Ascending aorta (tissue), 2 donors: ENCODE measurements at regions of chr4 and their contacts with region 1.

Region 1: GRCh38 chr4:155353923-155354540 is 22.7 kb downstream of the MAP9 start:
- DNase-seq: peak in 1 of 2 donors; percentile 79
- H3K4me3 ChIP-seq: no peak overlapping the region
- H3K27ac ChIP-seq: no peak overlapping the region
- H3K4me1 ChIP-seq: no peaks in the 10 kb centered on the region
- H3K27me3 ChIP-seq: no peaks in the 10 kb centered on the region
- CTCF ChIP-seq: peak; percentile 15 to 70 (median 62)

Region 2: DNA sequence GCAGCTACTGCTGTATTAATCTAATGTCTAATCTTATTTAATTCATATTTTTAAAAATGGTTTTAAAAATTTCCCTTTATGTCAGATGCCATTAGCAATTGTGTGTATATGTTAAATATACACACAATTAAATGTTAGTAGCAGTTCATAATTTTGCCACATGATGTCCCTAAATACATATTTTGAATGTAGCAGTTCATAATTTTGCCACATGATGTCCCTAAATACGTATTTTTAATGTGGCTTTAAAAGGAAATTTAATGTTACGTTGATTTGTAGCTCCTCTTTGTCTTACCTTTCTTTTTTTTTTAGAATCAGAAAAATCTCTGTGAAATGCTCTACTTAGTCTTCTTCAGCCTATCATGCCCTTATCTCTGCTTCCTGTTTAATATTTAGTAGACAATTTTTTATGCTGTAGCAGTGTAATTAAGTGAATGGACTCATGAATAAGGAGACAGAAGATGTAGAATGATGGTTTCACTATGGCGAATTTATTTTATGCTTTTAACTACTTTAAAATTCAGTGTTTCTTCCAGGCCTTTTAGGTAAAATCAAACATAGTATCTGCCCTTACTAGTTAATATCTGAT is 546.9 kb before region 1 on chr4:
- intact Hi-C with region 1: loop called (anchors 10 kb)
- DNase-seq: no peak
- H3K4me3 ChIP-seq: no peak overlapping the region
- H3K27ac ChIP-seq: no peak overlapping the region
- H3K4me1 ChIP-seq: no peaks in the 10 kb centered on the region
- H3K27me3 ChIP-seq: no peaks in the 10 kb centered on the region
- CTCF ChIP-seq: peak in 2 of 3 experiments; percentile 50 to 52

Region 3: GRCh38 chr4:154982187-154983047 is 371.6 kb before region 1 on chr4:
- intact Hi-C with region 1: loop called (anchors 5 kb)
- DNase-seq: peak in 1 of 2 donors; percentile 66
- H3K4me3 ChIP-seq: no peak overlapping the region
- H3K27ac ChIP-seq: no peak overlapping the region
- H3K4me1 ChIP-seq: no peaks in the 10 kb centered on the region
- H3K27me3 ChIP-seq: no peaks in the 10 kb centered on the region
- CTCF ChIP-seq: peak in 2 of 3 experiments; percentile 42 to 63

Region 4: GRCh38 chr4:155566354-155566753 is 212.3 kb after region 1 on chr4:
- intact Hi-C with region 1: no loop called
- DNase-seq: no peak
- H3K4me3 ChIP-seq: no peak overlapping the region
- H3K27ac ChIP-seq: no peak overlapping the region
- H3K4me1 ChIP-seq: no peaks in the 10 kb centered on the region
- H3K27me3 ChIP-seq: no peaks in the 10 kb centered on the region
- CTCF ChIP-seq: no peak

Region 5: GRCh38 chr4:155667568-155668511 is 313.8 kb after region 1 on chr4:
- intact Hi-C with region 1: no loop called
- DNase-seq: peak in 1 of 2 donors; percentile 73
- H3K4me3 ChIP-seq: peak overlapping the region; percentile 58 to 85
- H3K27ac ChIP-seq: peak overlapping the region; percentile 90 to 97
- H3K4me1 ChIP-seq: peaks cover 0 to 16% of the 10 kb centered on the region in 2 donors
- H3K27me3 ChIP-seq: no peaks in the 10 kb centered on the region
- CTCF ChIP-seq: no peak